Left colon (tissue), 2 donors: ENCODE measurements at regions of chr12 and their contacts with region 1.

Region 1: DNA sequence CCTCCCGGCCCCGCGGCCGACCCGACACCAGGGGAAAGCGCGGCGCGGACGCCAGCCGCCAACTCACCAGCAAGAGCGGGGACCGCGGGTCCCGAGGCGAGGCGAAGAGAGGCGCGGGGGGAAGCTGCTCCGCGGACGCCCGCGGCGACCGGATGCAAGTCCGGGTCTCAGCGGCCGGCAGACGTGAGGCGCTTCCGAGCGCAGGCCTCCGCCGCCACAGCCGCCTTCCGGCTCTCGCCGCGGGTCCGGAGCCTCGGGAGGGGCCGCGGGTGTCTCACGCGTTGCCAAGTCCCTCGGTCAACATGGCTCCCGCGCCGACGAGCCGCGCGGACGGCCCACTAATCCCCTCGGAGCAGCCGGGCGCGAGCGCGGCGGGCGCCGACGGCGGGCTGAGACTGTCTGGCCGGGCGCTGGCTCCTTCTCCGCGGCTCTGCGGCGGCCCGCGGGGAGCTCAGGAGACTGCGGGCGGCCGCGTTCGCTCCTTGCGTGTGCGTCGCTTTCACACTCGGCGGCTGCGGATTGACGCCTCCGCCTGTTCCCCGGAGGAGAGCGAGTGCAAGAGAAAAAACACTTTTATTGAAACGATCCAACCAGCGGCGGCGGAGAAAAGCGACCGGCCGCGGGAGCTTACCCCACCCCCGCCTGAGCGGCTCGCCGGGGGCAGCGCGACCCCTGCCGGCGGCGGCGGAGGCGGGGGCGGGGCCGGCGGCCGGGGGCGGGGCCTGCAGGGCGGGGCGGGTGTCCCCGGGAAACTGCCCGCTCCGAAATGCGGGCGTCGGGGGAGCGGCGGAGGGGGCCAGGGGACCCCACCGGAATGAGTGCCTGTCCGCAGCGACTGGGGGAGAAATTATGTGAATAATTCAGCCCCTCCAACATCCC is at the start of gene CDK17:
- DNase-seq: peak; percentile 79 to 87
- ATAC-seq: peak; percentile 81
- total RNA-seq, gene CDK17: 20.6 to 21.0 TPM

Region 2: DNA sequence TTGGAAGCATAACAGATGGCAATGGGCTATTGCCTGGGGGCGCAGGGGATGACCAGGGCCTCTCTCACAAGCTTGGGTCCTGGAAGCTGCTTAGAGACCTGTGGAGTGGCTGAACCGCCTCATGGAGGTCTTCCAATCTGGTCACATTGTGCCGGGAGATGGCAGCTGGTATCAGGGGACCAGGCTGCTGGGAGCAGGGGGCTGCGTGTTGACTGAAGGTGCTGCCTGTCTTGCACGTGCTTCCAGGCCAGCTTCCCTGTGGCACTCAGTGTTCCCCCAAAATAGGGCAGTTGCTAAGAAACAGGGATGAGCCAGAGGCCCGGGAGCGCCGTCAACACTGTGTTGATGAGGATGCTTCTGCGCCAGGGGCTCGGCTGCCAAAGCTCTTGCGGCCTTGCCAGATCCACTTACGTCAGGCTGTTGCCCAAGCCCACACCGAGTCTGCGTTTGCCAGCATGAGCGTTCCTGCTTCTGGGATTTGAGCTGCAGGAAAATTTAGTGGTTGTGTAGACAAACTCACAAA is 166.2 kb before region 1 on chr12:
- intact Hi-C with region 1: loop called in 1 of 2 experiments (anchors 5 kb)
- DNase-seq: peak; percentile 58 to 87
- ATAC-seq: peak; percentile 39

Region 3: GRCh38 chr12:96501139-96501761 is 101.1 kb after region 1 on chr12:
- intact Hi-C with region 1: loop called in 1 of 2 experiments (anchors 10 kb)
- DNase-seq: peak; percentile 22 to 51
- ATAC-seq: peak; percentile 98